ENCODE measurements at regions of chr4 and their contacts with region 1.

Region 1: DNA sequence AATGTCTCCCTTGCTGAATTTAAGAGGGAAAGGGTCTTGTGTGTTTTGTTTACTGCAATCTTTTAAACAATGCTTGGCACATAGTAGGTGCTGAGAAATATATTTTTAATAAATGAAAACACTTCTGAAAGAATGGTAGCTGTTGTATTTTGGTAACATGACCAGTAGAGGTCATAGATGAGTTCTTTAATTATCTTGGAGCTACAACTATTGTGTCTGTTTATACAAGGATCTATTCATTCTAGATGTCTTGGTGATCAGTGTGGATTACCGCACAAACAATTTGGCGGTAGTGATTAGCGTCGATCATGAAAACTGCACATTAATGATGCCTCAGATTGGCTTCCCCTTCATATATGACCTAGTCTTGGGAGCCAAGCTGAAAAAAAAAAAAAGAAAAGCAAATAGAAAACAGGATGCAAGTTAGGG is 21.4 kb upstream of the SCRG1 start:
- DNase-seq: no peak
- ATAC-seq: peak in 3 of 4 donors; percentile 36 to 56 (median 36)
- H3K4me3 ChIP-seq: no peak overlapping the region
- H3K27ac ChIP-seq: no peak overlapping the region
- H3K4me1 ChIP-seq: peaks cover 0 to 4% (median 0%) of the 10 kb centered on the region in 3 donors
- H3K27me3 ChIP-seq: no peaks in the 10 kb centered on the region
- CTCF ChIP-seq: peak in 2 of 4 donors; percentile 17 to 34

Region 2: GRCh38 chr4:173013232-173013930 is 407.0 kb before region 1 on chr4:
- intact Hi-C with region 1: loop called in 2 of 3 experiments (anchors 10 kb)
- DNase-seq: peak in 1 of 6 donors; percentile 50
- ATAC-seq: peak; percentile 61 to 90 (median 82)
- H3K4me3 ChIP-seq: no peak overlapping the region
- H3K27ac ChIP-seq: no peak overlapping the region
- H3K4me1 ChIP-seq: no peaks in the 10 kb centered on the region
- H3K27me3 ChIP-seq: no peaks in the 10 kb centered on the region
- CTCF ChIP-seq: peak; percentile 30 to 68 (median 46)

Region 3: GRCh38 chr4:173231916-173232315 is 188.4 kb before region 1 on chr4:
- intact Hi-C with region 1: no loop called
- DNase-seq: no peak
- ATAC-seq: peak; percentile 71 to 88 (median 86)
- H3K4me3 ChIP-seq: no peak overlapping the region
- H3K27ac ChIP-seq: no peak overlapping the region
- H3K4me1 ChIP-seq: no peaks in the 10 kb centered on the region
- H3K27me3 ChIP-seq: no peaks in the 10 kb centered on the region
- CTCF ChIP-seq: no peak

Region 4: DNA sequence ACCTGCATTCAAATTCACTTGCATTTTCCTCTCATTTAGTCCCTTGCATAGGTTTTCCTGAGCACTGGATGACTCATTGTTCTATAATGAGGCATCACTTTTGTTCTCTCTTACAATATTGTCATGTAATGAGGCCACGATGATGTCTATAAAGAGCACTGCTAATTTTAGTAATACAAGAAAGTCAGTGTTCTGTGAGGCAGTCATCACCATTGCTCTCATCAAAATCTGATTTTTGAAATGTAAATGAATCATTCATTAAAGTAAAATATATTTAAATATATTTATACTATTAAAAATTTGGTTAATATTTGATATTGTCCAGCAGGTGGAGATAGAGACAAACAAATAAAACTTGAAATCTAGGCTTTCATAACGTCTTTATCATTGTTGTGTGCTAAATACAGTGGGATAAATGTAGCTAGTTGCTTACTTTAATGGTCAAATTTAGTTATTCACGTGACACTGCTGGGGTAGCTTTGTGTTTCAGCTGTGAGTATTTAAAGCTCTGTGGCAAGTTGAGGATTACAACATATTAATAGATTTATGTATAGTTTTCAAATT is 101.6 kb before region 1 on chr4:
- intact Hi-C with region 1: loop called in 1 of 3 experiments (anchors 10 kb)
- DNase-seq: no peak
- ATAC-seq: peak in 3 of 4 donors; percentile 64 to 81 (median 74)
- H3K4me3 ChIP-seq: no peak overlapping the region
- H3K27ac ChIP-seq: no peak overlapping the region
- H3K4me1 ChIP-seq: peaks cover 0 to 4% (median 0%) of the 10 kb centered on the region in 3 donors
- H3K27me3 ChIP-seq: no peaks in the 10 kb centered on the region
- CTCF ChIP-seq: peak in 2 of 4 donors; percentile 20 to 34

Region 5: GRCh38 chr4:173494013-173494970 is 74.0 kb after region 1 on chr4:
- intact Hi-C with region 1: loop called in 1 of 3 experiments (anchors 10 kb)
- DNase-seq: peak in 5 of 6 donors; percentile 44 to 63 (median 56)
- ATAC-seq: peak; percentile 87 to 98 (median 95)
- H3K4me3 ChIP-seq: peak overlapping the region in 3 of 4 donors; percentile 14 to 46 (median 34)
- H3K27ac ChIP-seq: no peak overlapping the region
- H3K4me1 ChIP-seq: no peaks in the 10 kb centered on the region
- H3K27me3 ChIP-seq: no peaks in the 10 kb centered on the region
- CTCF ChIP-seq: peak; percentile 52 to 70 (median 64)

Region 6: GRCh38 chr4:173935622-173936405 is 515.5 kb after region 1 on chr4:
- intact Hi-C with region 1: no loop called
- DNase-seq: no peak
- ATAC-seq: no peak
- H3K4me3 ChIP-seq: no peak overlapping the region
- H3K27ac ChIP-seq: no peak overlapping the region
- H3K4me1 ChIP-seq: no peaks in the 10 kb centered on the region
- H3K27me3 ChIP-seq: peaks cover 0 to 10% (median 0%) of the 10 kb centered on the region in 4 donors
- CTCF ChIP-seq: no peak